H1 (cell line): ENCODE measurements at regions of chr6 and their contacts with region 1.

Region 1: DNA sequence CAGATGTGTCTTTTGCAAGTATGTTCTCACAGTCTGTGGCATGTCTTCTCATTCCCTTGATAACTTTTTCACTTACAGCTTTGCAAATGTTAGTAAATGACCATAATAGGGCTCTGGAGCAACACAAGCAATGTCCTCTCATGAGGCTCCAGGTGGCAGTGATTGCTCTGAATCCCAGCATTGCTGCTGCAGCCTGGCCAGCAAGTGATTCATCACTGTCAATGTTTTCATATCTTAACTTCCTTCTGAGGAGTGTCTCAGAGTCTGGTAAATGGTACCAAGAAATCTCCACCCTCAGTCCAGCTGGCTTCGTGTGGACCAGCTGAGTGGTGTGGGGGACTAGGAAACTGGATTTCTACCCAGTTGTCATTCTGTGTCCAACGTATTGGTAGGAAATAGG is 139.6 kb downstream of the MYLK4 start:
- DNase-seq: no peak
- H3K4me3 ChIP-seq: no peak overlapping the region
- H3K27ac ChIP-seq: no peak overlapping the region
- H3K4me1 ChIP-seq: no peaks in the 10 kb centered on the region
- H3K27me3 ChIP-seq: no peaks in the 10 kb centered on the region
- CTCF ChIP-seq: no peak
- EP300 ChIP-seq: no peak
- POLR2A ChIP-seq: no peak
- RAD21 ChIP-seq: no peak

Region 2: DNA sequence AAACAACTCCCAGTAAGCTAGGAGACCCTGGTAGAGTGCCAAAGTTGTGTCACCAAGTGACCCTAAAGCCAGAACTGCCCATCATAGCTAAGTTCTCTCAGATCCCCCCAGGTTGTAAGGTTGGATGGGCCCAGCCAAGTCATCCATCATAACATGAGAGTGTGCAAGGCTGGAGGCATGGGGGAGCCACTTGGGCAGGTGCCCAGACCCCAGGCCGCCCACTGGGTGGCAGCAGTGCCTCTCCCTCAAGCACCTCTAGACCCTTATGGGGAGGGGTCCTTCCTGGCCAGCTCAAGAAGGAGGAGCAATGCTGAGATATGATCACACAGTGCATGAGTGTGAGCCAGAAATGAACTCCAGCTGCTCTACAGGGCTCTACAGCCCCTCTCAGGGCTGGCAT is 14.9 kb before region 1 on chr6:
- CTCF ChIA-PET with region 1: interaction called, 13 read pairs
- POLR2A ChIA-PET with region 1: interaction called, 4 read pairs
- DNase-seq: peak; percentile 44 to 71
- H3K4me3 ChIP-seq: no peak overlapping the region
- H3K27ac ChIP-seq: no peak overlapping the region
- H3K4me1 ChIP-seq: 0 out of 7 replicates have a peak, but pooled peaks cover 0 to 2% (median 0%) of the 10 kb centered on the region in 4 experiments
- H3K27me3 ChIP-seq: no peaks in the 10 kb centered on the region
- CTCF ChIP-seq: peak; percentile 89 to 91 (median 89)
- EP300 ChIP-seq: no peak
- POLR2A ChIP-seq: no peak
- RAD21 ChIP-seq: peak; percentile 83 to 93